CD14-positive monocyte (primary cell): ENCODE measurements at regions of chr1 and their contacts with region 1.

Region 1: DNA sequence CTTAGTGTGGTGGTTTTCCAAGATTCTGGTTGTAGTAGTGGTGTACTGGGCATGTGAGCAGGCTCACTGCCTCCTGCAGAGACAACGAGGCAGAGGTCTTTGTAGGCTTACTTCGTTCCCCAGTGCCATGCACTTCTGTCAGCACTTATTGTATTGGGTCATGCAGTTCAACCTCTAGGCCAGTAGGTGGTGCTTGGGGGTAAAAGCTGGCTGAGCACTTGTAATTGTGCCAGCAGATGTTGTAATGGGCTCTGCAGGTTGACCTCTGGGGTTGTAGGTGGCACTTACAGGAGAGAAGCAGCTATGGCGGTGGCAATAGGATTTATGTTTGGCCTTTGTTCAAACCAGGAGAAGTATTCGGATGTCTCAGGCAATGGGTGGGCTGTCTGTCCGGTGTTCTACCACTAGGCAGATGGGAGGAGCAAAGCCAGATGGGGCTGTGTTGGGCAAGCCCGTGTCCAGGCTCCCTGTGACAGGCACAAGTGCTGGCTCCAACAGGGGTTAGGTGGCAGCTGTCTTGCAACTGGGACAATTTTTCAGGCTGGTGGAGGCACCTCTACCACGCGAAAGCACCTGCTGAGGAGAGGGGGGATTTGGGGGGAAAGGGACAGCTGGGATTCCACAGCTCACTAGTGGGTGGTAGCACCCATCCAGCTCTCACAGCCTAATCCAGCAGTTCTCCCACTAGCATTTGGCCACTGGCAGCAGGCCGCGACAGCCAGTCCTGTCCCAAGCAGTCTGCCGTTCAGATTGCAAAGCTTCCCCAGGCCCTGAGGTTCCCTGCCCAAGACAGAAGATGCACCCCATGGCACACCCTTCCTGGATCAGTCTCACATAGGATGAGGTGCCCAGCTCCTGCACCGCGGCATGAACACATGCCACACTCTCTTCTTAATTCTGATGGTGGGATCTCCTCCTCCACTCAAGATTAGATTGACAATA is 274.5 kb downstream of the CTH start:
- DNase-seq: peak; percentile 39 to 62 (median 59)
- H3K4me3 ChIP-seq: no peak overlapping the region
- H3K4me3 Mint-ChIP-seq: no peak overlapping the region
- H3K27ac ChIP-seq: no peak overlapping the region
- H3K27ac Mint-ChIP-seq: peak overlapping the region in 1 of 7 donors; percentile 18
- H3K4me1 ChIP-seq: no peaks in the 10 kb centered on the region
- H3K4me1 Mint-ChIP-seq: no peaks in the 10 kb centered on the region
- H3K27me3 ChIP-seq: no peaks in the 10 kb centered on the region
- H3K27me3 Mint-ChIP-seq: peaks cover 2 to 7% (median 3%) of the 10 kb centered on the region in 3 donors
- CTCF ChIP-seq: peak; percentile 80

Region 2: GRCh38 chr1:70583522-70583921 is 102.0 kb before region 1 on chr1:
- intact Hi-C with region 1: no loop called
- DNase-seq: no peak
- H3K4me3 ChIP-seq: no peak overlapping the region
- H3K4me3 Mint-ChIP-seq: no peak overlapping the region
- H3K27ac ChIP-seq: no peak overlapping the region
- H3K27ac Mint-ChIP-seq: no peak overlapping the region
- H3K4me1 ChIP-seq: no peaks in the 10 kb centered on the region
- H3K4me1 Mint-ChIP-seq: no peaks in the 10 kb centered on the region
- H3K27me3 ChIP-seq: no peaks in the 10 kb centered on the region
- H3K27me3 Mint-ChIP-seq: no peaks in the 10 kb centered on the region
- CTCF ChIP-seq: no peak

Region 3: GRCh38 chr1:71049951-71050598 is 364.5 kb after region 1 on chr1:
- intact Hi-C with region 1: loop called (anchors 2 to 5 kb)
- DNase-seq: peak; percentile 39 to 65 (median 58)
- H3K4me3 ChIP-seq: no peak overlapping the region
- H3K4me3 Mint-ChIP-seq: no peak overlapping the region
- H3K27ac ChIP-seq: no peak overlapping the region
- H3K27ac Mint-ChIP-seq: no peak overlapping the region
- H3K4me1 ChIP-seq: peaks cover 18 to 20% of the 10 kb centered on the region in 2 donors
- H3K4me1 Mint-ChIP-seq: peaks cover 22% of the 10 kb centered on the region
- H3K27me3 ChIP-seq: peaks cover 36 to 61% of the 10 kb centered on the region in 2 donors
- H3K27me3 Mint-ChIP-seq: peaks cover 43 to 63% (median 46%) of the 10 kb centered on the region in 3 donors
- CTCF ChIP-seq: peak; percentile 76